CD8-positive, alpha-beta T cell (primary cell): ENCODE measurements at regions of chr6 and their contacts with region 1.

Region 1: DNA sequence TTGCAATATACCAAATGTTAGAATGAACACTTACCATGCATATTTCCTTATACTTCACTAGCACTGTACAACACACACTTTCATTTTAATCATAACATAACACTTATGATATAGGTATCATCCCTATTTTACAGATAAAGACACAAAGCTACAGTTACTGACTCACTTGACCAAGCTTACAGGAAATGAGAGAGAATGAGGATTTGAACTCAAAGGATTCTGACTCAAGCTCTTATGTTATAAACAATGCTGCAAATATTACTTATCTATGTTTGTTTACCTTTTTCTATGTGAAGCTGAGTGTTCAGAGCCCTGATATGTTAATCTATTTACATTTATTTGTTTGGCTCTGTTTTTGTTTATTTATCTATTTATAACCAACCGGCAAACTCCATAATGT is 245.4 kb downstream of the PTPRK start:
- DNase-seq: no peak
- ATAC-seq: no peak
- H3K4me3 ChIP-seq: no peak overlapping the region
- H3K4me3 Mint-ChIP-seq: no peak overlapping the region
- H3K27ac ChIP-seq: no peak overlapping the region
- H3K27ac Mint-ChIP-seq: no peak overlapping the region
- H3K4me1 ChIP-seq: no peaks in the 10 kb centered on the region
- H3K4me1 Mint-ChIP-seq: no peaks in the 10 kb centered on the region
- H3K27me3 ChIP-seq: no peaks in the 10 kb centered on the region
- H3K27me3 Mint-ChIP-seq: no peaks in the 10 kb centered on the region
- CTCF ChIP-seq: no peak

Region 2: DNA sequence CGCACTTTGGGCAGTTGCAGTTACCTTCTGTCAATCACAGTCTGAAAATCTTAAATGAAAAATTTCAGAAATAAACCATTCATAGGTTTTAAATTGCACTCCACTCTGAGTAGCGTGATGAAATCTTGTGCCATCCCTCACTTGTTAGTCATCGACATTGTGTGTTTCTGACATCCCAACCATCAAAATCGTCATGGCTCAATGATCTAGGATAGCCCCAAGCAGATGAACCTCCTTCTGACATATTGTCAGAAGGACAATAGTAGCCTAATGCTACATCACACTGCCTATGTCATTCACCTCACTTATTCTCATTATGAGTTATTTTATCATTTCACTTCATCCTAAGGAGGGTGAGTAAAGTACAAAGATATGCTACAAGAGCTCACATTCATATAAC is 39.5 kb before region 1 on chr6:
- CTCF ChIA-PET with region 1: no interaction called
- POLR2A ChIA-PET with region 1: no interaction called
- intact Hi-C with region 1: no loop called
- DNase-seq: no peak
- ATAC-seq: no peak
- H3K4me3 ChIP-seq: no peak overlapping the region
- H3K4me3 Mint-ChIP-seq: no peak overlapping the region
- H3K27ac ChIP-seq: no peak overlapping the region
- H3K27ac Mint-ChIP-seq: no peak overlapping the region
- H3K4me1 ChIP-seq: peaks cover 14% of the 10 kb centered on the region
- H3K4me1 Mint-ChIP-seq: peaks cover 12% of the 10 kb centered on the region
- H3K27me3 ChIP-seq: no peaks in the 10 kb centered on the region
- H3K27me3 Mint-ChIP-seq: no peaks in the 10 kb centered on the region
- CTCF ChIP-seq: no peak

Region 3: DNA sequence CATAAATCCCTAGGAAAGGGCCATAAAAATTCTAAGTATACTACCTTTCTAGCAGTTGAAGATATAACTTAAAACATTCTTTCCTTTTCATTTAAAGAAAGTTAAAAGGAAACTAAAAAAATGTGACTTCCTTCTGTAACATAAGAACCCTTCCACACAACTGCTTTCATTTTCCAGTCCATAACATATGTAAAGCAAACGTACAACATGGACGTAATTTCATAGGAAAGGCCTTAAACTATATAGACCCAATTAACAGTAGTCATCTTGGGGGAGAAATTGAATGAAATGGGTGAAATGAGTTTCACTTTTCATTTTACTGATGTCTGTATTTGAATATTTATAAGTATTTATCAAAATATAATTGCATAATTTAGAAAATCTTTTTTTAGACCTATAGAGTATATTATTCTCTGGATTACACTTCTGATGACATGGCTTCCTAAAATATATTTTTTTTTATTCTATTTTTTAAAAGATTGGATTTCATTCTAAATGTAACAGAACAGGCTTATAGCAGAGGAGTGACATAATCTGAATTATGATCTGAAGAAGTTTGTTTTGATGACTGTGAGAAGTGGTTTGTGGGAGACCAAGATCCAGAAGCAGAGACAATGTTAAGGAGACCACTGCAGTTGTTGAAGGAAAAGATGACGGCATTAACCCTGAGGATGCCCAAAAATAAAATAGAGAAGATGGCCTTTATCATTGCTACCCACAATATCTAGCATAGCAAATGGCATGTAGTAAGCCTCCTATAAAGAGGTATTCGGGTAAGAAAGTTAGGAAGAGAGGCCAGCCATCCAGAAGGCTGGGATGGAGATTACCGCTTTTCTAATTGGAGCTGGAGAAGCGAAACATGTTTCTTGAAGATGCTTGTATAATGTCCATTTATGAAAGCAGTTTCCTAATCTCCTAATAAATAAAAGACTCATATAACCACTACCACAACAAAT is 15.0 kb before region 1 on chr6:
- CTCF ChIA-PET with region 1: no interaction called
- POLR2A ChIA-PET with region 1: no interaction called
- intact Hi-C with region 1: loop called in 1 of 2 experiments (anchors 2 kb)
- DNase-seq: peak in 2 of 9 experiments; percentile 31 to 63
- ATAC-seq: peak; percentile 77
- H3K4me3 ChIP-seq: peak overlapping the region; percentile 31 to 42
- H3K4me3 Mint-ChIP-seq: peak overlapping the region; percentile 83
- H3K27ac ChIP-seq: peak overlapping the region; percentile 49 to 69
- H3K27ac Mint-ChIP-seq: peak overlapping the region; percentile 89
- H3K4me1 ChIP-seq: peaks cover 18% of the 10 kb centered on the region
- H3K4me1 Mint-ChIP-seq: peaks cover 29% of the 10 kb centered on the region
- H3K27me3 ChIP-seq: no peaks in the 10 kb centered on the region
- H3K27me3 Mint-ChIP-seq: no peaks in the 10 kb centered on the region
- CTCF ChIP-seq: no peak

Region 4: DNA sequence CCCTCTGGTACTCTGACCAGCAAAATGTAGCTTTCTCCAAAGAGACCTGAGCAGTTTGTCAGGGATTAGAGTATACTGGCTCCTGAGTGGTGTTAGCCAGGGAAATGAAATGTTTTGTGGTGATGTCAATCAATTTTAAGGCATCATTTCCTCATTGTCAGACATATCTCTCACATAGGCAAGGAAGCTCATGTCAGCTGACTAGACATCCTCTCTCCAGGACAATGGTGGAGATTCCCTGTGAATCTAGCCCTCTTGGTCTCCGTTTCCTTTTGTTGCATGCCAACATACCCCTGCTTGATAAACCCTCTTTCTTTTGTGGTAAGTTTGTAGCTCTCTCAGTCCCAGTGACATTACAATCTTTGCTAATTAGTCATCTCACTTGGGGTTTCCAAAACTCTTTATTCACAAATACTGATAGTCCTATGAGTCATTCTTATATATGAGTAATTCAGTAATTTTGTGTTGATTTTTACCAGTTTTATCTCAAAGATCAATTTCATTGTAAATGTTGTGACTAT is 381.0 kb after region 1 on chr6:
- CTCF ChIA-PET with region 1: no interaction called
- POLR2A ChIA-PET with region 1: no interaction called
- intact Hi-C with region 1: no loop called
- DNase-seq: no peak
- ATAC-seq: no peak
- H3K4me3 ChIP-seq: no peak overlapping the region
- H3K4me3 Mint-ChIP-seq: no peak overlapping the region
- H3K27ac ChIP-seq: no peak overlapping the region
- H3K27ac Mint-ChIP-seq: no peak overlapping the region
- H3K4me1 ChIP-seq: no peaks in the 10 kb centered on the region
- H3K4me1 Mint-ChIP-seq: no peaks in the 10 kb centered on the region
- H3K27me3 ChIP-seq: no peaks in the 10 kb centered on the region
- H3K27me3 Mint-ChIP-seq: peaks cover 3% of the 10 kb centered on the region
- CTCF ChIP-seq: no peak